GM12878 (cell line): ENCODE measurements at regions of chr6 and their contacts with region 1.

Region 1: GRCh38 chr6:167141667-167142432 is 15.9 kb downstream of the GPR31 start:
- DNase-seq: no peak
- ATAC-seq: peak; percentile 96
- H3K4me3 ChIP-seq: no peak overlapping the region
- H3K27ac ChIP-seq: no peak overlapping the region
- H3K4me1 ChIP-seq: peaks cover 10% of the 10 kb centered on the region
- H3K27me3 ChIP-seq: no peaks in the 10 kb centered on the region
- CTCF ChIP-seq: peak; percentile 94 to 98 (median 96); a peak in 5 of 6 replicates
- EP300 ChIP-seq: no peak
- POLR2A ChIP-seq: no peak
- RAD21 ChIP-seq: peak; percentile 99

Region 2: GRCh38 chr6:166786704-166787293 is 355.1 kb before region 1 on chr6:
- CTCF ChIA-PET with region 1: interaction called, 34 read pairs
- POLR2A ChIA-PET with region 1: no interaction called
- RAD21 ChIA-PET with region 1: interaction called, 14 read pairs
- SMC1A ChIA-PET with region 1: interaction called, 29 read pairs
- in situ Hi-C with region 1: no loop called
- intact Hi-C with region 1: loop called (anchors 1 kb)
- DNase-seq: peak; percentile 21
- ATAC-seq: peak; percentile 83
- H3K4me3 ChIP-seq: no peak overlapping the region
- H3K27ac ChIP-seq: no peak overlapping the region
- H3K4me1 ChIP-seq: no peaks in the 10 kb centered on the region
- H3K27me3 ChIP-seq: no peaks in the 10 kb centered on the region
- CTCF ChIP-seq: peak; percentile 61 to 74 (median 64)
- EP300 ChIP-seq: no peak
- POLR2A ChIP-seq: no peak
- RAD21 ChIP-seq: peak; percentile 93

Region 3: GRCh38 chr6:166999145-166999883 is 142.5 kb before region 1 on chr6 and contains the start of gene CEP43:
- CTCF ChIA-PET with region 1: interaction called, 54 read pairs
- POLR2A ChIA-PET with region 1: no interaction called
- RAD21 ChIA-PET with region 1: interaction called, 56 read pairs
- SMC1A ChIA-PET with region 1: interaction called, 61 read pairs
- in situ Hi-C with region 1: loop called (anchors 25 kb)
- intact Hi-C with region 1: loop called (anchors 1 kb)
- DNase-seq: peak; percentile 71
- ATAC-seq: peak; percentile 92
- H3K4me3 ChIP-seq: peak within 1 kb of the TSS; percentile 91
- H3K27ac ChIP-seq: peak within 1 kb of the TSS; percentile 69
- H3K4me1 ChIP-seq: peaks cover 3% of the 10 kb centered on the region; the same call in 1 of the 2 replicates
- H3K27me3 ChIP-seq: no peaks in the 10 kb centered on the region
- CTCF ChIP-seq: no peak
- EP300 ChIP-seq: no peak
- POLR2A ChIP-seq: peak; percentile 73
- RAD21 ChIP-seq: no peak
- polyA plus RNA-seq, gene CEP43: 7.7 to 11.4 TPM

Region 4: GRCh38 chr6:167047554-167047953 is 94.3 kb before region 1 on chr6:
- CTCF ChIA-PET with region 1: interaction called, 32 read pairs
- POLR2A ChIA-PET with region 1: interaction called, 5 read pairs
- RAD21 ChIA-PET with region 1: interaction called, 14 read pairs
- SMC1A ChIA-PET with region 1: interaction called, 11 read pairs
- in situ Hi-C with region 1: no loop called
- intact Hi-C with region 1: no loop called
- DNase-seq: peak; percentile 86
- ATAC-seq: peak; percentile 87
- H3K4me3 ChIP-seq: peak overlapping the region; percentile 36; the same call in 1 of the 2 replicates
- H3K27ac ChIP-seq: peak overlapping the region; percentile 89
- H3K4me1 ChIP-seq: peaks cover 36% of the 10 kb centered on the region
- H3K27me3 ChIP-seq: no peaks in the 10 kb centered on the region
- CTCF ChIP-seq: no peak
- EP300 ChIP-seq: peak; percentile 74 to 77; a peak in 3 of 4 replicates
- POLR2A ChIP-seq: no peak
- RAD21 ChIP-seq: no peak

Region 5: DNA sequence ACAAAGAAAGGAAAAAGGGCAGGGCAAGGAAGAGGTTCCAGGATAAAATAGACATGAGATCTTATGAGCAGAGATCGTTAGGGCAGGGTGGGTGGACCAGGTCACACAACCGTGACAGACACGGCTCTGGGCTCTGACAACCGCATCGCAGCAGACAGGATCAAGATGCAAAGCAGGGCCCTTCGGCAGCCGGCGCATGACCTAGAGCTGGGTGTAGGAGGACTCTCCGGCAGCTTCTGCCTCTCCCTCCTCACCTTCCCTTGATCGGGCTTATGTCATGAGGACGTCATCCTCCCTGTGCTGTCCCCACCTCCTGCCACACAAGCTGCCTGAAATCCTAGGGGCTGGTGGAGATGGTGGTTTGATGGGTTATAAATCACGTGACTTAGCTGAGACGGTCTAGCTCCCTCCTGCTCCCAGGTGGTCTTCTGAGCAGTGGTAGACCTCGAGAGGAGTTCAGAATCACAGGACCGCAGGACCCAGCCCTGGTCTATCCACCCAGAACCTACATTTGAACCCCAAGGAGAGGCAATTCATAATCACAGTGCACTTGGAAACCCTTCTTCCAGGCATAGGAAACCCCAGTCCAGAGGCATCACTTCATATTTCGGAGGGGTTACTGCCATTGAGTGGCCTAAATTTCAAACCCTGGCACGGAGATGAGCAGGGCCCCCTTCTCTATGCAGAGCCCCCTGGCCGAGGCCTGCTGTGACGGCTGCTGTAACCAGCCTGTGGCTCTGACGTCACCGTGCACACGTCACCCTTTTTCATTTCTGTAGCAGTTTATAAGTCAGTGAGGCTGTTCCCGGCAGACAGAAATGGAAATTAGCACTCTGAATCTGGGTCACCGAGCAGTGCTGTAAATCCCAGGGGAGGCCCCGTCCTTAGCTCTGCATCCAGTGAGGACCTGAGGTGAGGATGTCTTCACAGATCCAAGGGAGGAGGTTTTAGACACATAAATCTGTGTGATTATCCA is 27.6 kb before region 1 on chr6:
- CTCF ChIA-PET with region 1: interaction called, 16 read pairs
- POLR2A ChIA-PET with region 1: interaction called, 5 read pairs
- RAD21 ChIA-PET with region 1: interaction called, 120 read pairs
- SMC1A ChIA-PET with region 1: interaction called, 351 read pairs
- in situ Hi-C with region 1: no loop called
- intact Hi-C with region 1: no loop called
- DNase-seq: peak; percentile 93
- ATAC-seq: peak; percentile 90
- H3K4me3 ChIP-seq: peak overlapping the region; percentile 30; the same call in 1 of the 2 replicates
- H3K27ac ChIP-seq: peak overlapping the region; percentile 94
- H3K4me1 ChIP-seq: peaks cover 54% of the 10 kb centered on the region
- H3K27me3 ChIP-seq: no peaks in the 10 kb centered on the region
- CTCF ChIP-seq: no peak
- EP300 ChIP-seq: peak; percentile 83 to 91
- POLR2A ChIP-seq: peak; percentile 65
- RAD21 ChIP-seq: 0 out of 2 replicates have a peak, but pooled peaks have one; percentile 1

Region 6: GRCh38 chr6:167153521-167153959 is 11.7 kb after region 1 on chr6:
- CTCF ChIA-PET with region 1: interaction called, 35 read pairs
- POLR2A ChIA-PET with region 1: interaction called, 3 read pairs
- RAD21 ChIA-PET with region 1: interaction called, 16 read pairs
- SMC1A ChIA-PET with region 1: interaction called, 16 read pairs
- in situ Hi-C with region 1: no loop called
- intact Hi-C with region 1: no loop called
- DNase-seq: peak; percentile 78
- ATAC-seq: peak; percentile 71
- H3K4me3 ChIP-seq: peak overlapping the region; percentile 54
- H3K27ac ChIP-seq: peak overlapping the region; percentile 70
- H3K4me1 ChIP-seq: peaks cover 30% of the 10 kb centered on the region
- H3K27me3 ChIP-seq: no peaks in the 10 kb centered on the region; a peak in 1 of 4 replicates
- CTCF ChIP-seq: no peak
- EP300 ChIP-seq: peak; percentile 81; a peak in 3 of 4 replicates
- POLR2A ChIP-seq: no peak
- RAD21 ChIP-seq: no peak